Heart left ventricle (tissue), 16 donors: ENCODE measurements at regions of chr10 and their contacts with region 1.

Region 1: DNA sequence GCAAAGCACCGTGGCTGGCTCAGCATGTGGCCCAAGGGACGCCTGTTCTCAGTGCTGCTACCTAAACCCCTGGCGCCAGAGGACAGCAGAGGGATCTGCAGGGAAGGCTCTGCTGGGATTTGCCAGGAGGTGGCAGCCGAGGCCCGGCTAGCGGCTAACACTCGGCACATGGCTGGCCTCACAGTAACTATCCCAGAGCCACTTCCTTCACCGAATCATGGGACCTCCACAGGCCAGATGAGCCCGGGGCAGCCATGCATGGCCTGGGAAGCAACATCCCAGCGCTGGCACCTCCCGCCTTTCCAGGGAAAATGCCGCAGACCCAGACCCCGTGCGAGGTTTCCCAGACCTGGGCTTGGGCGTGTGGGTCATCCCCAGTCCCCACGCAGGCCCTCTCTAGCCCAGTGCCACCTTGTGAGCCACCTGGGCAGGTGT is 36.4 kb downstream of the DPYSL4 start:
- DNase-seq: peak; percentile 80 to 89 (median 83)
- ATAC-seq: peak; percentile 91 to 98 (median 94)
- H3K4me3 ChIP-seq: no peak overlapping the region
- H3K27ac ChIP-seq: no peak overlapping the region
- H3K4me1 ChIP-seq: peaks cover 0 to 34% (median 0%) of the 10 kb centered on the region in 12 donors
- H3K27me3 ChIP-seq: no peaks in the 10 kb centered on the region
- CTCF ChIP-seq: peak; percentile 86 to 96 (median 91)
- POLR2A ChIP-seq: no peak

Region 2: DNA sequence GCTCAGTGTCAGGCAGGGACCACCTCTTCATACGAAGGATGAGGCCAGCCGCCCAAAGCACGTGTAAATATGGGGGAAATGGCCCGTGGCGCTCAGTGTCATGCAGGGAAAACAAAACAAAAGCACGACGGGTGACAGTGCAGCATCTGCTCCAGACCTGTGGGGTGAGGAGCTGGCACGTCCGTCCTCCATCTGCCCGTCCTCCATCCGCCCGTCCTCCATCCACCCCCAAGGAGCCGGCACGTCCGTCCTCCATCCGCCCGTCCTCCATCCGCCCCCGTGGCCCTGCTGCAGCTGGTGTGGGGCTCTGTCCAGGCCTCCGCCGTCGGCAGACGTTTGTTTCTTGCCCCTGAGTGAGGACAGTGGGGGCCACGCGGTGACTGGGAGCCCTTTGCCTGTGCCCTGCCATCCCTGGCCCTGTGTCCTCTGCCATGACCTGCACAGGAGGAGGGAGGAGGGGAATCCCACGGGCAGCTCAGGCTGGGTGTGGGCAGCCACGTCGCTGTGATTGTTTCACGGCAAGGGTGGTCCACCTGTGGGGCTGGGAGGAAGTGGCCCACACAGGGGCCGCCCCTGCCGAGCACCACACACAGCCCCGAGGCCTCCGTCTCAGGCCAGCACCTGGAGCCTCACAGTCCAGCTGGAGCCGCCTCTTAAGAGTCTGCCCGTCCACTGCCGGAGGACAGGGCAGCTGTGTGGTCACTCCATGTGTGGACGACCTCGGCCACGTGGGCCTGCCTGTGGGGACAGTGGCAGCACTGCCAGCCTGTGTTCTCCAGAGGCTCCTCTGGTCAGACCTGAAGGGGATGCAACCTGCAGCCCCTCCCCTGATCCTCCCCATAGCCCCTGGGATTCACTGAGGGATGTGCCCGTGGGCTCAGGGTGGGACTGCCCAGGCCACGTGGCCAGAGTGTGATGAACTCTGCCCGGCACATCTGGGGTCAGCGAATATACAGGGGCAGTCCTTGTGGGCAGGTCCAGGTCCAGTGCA is 74.6 kb before region 1 on chr10:
- intact Hi-C with region 1: no loop called
- DNase-seq: peak in 3 of 5 donors; percentile 19 to 58 (median 23)
- ATAC-seq: no peak
- H3K4me3 ChIP-seq: no peak overlapping the region
- H3K27ac ChIP-seq: no peak overlapping the region
- H3K4me1 ChIP-seq: no peaks in the 10 kb centered on the region
- H3K27me3 ChIP-seq: no peaks in the 10 kb centered on the region
- CTCF ChIP-seq: no peak
- POLR2A ChIP-seq: no peak

Region 3: GRCh38 chr10:132307823-132308587 is 84.8 kb after region 1 on chr10 and contains the start of gene STK32C:
- intact Hi-C with region 1: loop called in 1 of 10 experiments (anchors 5 kb)
- DNase-seq: peak; percentile 92 to 96 (median 93)
- ATAC-seq: peak; percentile 95 to 97 (median 96)
- H3K4me3 ChIP-seq: peak within 1 kb of the TSS; percentile 53 to 98 (median 87)
- H3K27ac ChIP-seq: peak within 1 kb of the TSS in 11 of 12 donors; percentile 52 to 86 (median 71)
- H3K4me1 ChIP-seq: peaks cover 0 to 24% (median 15%) of the 10 kb centered on the region in 12 donors
- H3K27me3 ChIP-seq: no peaks in the 10 kb centered on the region
- CTCF ChIP-seq: no peak
- POLR2A ChIP-seq: peak in 1 of 2 donors; percentile 49
- total RNA-seq, gene STK32C: 3.8 to 9.8 (median 6.2) TPM

Region 4: DNA sequence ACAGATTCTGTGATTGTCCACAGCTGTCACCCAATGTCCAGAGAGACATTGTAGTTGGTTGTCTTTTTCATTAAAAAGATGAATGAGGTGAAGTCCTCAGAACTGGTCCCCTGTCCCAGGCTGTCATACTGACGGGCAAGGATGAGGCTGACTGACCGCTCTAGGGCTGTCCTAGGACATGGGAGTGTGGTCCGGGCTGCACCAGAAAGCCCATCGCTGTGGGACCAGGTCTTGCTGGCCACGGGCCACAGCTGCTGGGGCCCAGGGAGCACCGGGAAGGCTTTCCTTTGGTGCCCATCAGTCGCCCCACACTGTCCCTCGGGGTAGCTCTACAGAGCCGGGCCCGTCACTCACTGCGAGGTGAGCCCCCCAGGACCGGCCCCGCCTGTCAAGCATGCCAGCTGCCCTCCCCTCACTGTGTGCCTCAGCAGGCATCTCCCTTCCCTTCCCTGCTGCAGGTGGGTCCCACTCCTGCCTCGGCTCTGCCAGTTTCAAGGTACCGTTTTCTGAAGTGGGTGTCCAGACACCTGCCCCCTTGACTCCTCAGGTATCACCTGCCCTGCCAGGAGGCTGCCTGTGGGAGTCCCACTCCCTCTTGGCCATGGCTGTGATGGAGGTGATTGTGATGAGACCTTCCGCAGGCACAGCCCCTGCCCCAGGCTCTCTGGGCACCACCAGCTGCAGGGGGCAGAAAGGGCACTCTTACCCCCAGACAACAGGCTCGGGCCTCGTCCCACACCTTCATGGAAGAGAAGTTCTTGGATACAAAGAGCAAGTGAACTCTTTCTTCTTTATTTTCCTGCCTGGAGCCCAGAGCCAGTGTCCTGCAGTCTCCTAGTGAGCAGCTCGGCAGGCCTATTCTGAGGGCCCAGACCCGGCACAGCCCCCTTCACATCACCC is 130.5 kb after region 1 on chr10:
- intact Hi-C with region 1: loop called (anchors 1 to 2 kb)
- DNase-seq: no peak
- ATAC-seq: peak in 1 of 4 donors; percentile 14
- H3K4me3 ChIP-seq: no peak overlapping the region
- H3K27ac ChIP-seq: no peak overlapping the region
- H3K4me1 ChIP-seq: no peaks in the 10 kb centered on the region
- H3K27me3 ChIP-seq: no peaks in the 10 kb centered on the region
- CTCF ChIP-seq: no peak
- POLR2A ChIP-seq: no peak

Region 5: GRCh38 chr10:132452631-132453469 is 229.7 kb after region 1 on chr10:
- intact Hi-C with region 1: loop called (anchors 1 to 5 kb)
- DNase-seq: peak; percentile 80 to 92 (median 87)
- ATAC-seq: peak; percentile 56 to 86 (median 78)
- H3K4me3 ChIP-seq: peak overlapping the region in 9 of 12 donors; percentile 1 to 37 (median 17)
- H3K27ac ChIP-seq: peak overlapping the region in 1 of 12 donors; percentile 43
- H3K4me1 ChIP-seq: peaks cover 0 to 29% (median 12%) of the 10 kb centered on the region in 12 donors
- H3K27me3 ChIP-seq: peaks cover 0 to 5% (median 0%) of the 10 kb centered on the region in 9 donors
- CTCF ChIP-seq: peak; percentile 92 to 99 (median 97)
- POLR2A ChIP-seq: no peak

Region 6: GRCh38 chr10:132458593-132459300 is 235.6 kb after region 1 on chr10:
- intact Hi-C with region 1: loop called (anchors 1 to 5 kb)
- DNase-seq: peak; percentile 51 to 85 (median 61)
- ATAC-seq: peak; percentile 40 to 67 (median 58)
- H3K4me3 ChIP-seq: no peak overlapping the region
- H3K27ac ChIP-seq: no peak overlapping the region
- H3K4me1 ChIP-seq: peaks cover 0 to 32% (median 22%) of the 10 kb centered on the region in 12 donors
- H3K27me3 ChIP-seq: peaks cover 0 to 10% (median 0%) of the 10 kb centered on the region in 9 donors
- CTCF ChIP-seq: peak; percentile 88 to 99 (median 96)
- POLR2A ChIP-seq: no peak

Region 7: GRCh38 chr10:132563843-132564521 is 340.8 kb after region 1 on chr10:
- intact Hi-C with region 1: loop called in 1 of 10 experiments (anchors 10 kb)
- DNase-seq: no peak
- ATAC-seq: no peak
- H3K4me3 ChIP-seq: no peak overlapping the region
- H3K27ac ChIP-seq: no peak overlapping the region
- H3K4me1 ChIP-seq: peaks cover 0 to 52% (median 9%) of the 10 kb centered on the region in 12 donors
- H3K27me3 ChIP-seq: no peaks in the 10 kb centered on the region
- CTCF ChIP-seq: no peak
- POLR2A ChIP-seq: no peak

Region 8: DNA sequence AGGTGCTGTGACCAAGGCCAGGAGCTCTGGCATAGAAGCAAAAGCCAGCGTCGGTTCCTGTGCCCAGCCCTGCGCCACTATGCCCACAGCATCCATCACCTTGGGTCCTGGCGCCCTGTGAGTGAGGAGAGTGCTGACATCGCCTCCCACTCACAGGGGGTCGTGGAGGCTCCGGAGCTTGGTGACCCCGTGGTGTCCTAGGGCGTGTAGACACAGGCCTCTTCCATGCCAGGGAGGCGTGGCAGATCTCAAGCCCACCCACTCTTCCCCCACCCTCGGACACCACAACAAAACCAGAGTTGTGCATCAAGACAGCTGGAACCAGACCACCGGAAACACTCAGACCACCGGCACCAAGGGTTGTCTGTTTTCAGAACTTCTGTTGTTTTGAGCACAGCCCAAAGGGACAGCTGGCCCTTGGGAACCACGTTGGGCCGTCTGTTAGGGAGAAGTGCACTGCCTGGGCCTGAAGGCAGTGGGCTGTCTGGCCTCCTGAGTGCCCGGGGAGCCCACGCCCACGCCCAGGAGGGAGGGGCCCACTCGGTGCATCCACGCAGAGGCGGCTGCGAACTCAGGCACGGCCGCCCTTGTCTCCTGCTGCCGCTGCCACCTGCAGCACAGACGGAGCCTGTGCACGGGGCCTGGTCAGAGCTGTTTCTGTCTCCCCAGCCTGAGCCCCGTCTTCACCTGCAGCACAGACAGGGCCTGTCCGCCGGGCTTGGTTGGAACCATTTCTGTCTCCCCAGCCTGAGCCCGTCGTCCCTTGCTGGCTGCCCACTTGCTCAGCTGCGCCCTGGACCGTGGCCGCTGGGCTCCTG is 420.7 kb after region 1 on chr10:
- intact Hi-C with region 1: loop called in 4 of 10 experiments (anchors 5 to 10 kb)
- DNase-seq: peak in 1 of 5 donors; percentile 50
- ATAC-seq: peak in 3 of 4 donors; percentile 4 to 11 (median 10)
- H3K4me3 ChIP-seq: no peak overlapping the region
- H3K27ac ChIP-seq: no peak overlapping the region
- H3K4me1 ChIP-seq: peaks cover 0 to 19% (median 1%) of the 10 kb centered on the region in 12 donors
- H3K27me3 ChIP-seq: no peaks in the 10 kb centered on the region
- CTCF ChIP-seq: no peak
- POLR2A ChIP-seq: no peak